Right ventricle myocardium inferior (tissue), 1 donor: ENCODE measurements at regions of chr7 and their contacts with region 1.

Region 1: GRCh38 chr7:115008465-115009114 is 86.7 kb downstream of the MDFIC start:
- DNase-seq: peak; percentile 87
- ATAC-seq: peak; percentile 97

Region 2: GRCh38 chr7:114806590-114807162 is 201.9 kb before region 1 on chr7:
- intact Hi-C with region 1: no loop called
- DNase-seq: no peak
- ATAC-seq: no peak

Region 3: GRCh38 chr7:114988755-114989375 is 19.7 kb before region 1 on chr7:
- intact Hi-C with region 1: loop called (anchors 1 kb)
- DNase-seq: peak; percentile 56
- ATAC-seq: peak; percentile 71